GM12878 (cell line): ENCODE measurements at regions of chr15 and their contacts with region 1.

Region 1: DNA sequence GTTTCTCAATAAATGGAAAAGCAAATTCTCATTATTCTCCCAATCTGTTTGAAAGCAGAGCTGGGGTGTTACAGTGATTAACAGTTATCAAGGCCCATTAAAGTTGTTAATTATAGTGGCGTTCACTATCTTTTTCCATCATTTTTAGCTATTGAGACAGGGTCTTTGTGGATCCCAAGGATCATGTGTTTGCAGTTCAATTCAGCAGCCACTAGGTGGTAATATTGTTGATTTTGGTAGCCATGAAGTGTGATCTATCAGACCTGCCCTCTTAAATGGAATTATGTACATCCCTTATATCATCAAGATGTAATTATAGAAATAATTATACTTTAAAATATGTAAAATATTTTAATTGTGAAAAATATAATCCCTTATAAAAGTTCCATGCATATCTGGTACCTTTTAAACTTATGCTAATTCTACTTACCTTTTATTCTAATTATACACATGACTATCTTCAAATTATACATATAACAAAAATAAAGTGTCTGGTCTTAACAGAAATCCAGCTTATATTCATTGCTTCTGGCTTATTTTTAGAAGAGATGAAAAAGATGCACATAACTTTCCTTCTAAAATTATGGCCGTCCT is 126.4 kb downstream of the GREM1 start:
- DNase-seq: no peak
- ATAC-seq: peak; percentile 74; the same call in 2 of the 3 replicates
- H3K4me3 ChIP-seq: no peak overlapping the region
- H3K27ac ChIP-seq: no peak overlapping the region
- H3K4me1 ChIP-seq: no peaks in the 10 kb centered on the region
- H3K27me3 ChIP-seq: 0 out of 4 replicates have a peak, but pooled peaks cover 2% of the 10 kb centered on the region in 2 experiments
- CTCF ChIP-seq: peak; percentile 58 to 65 (median 65); a peak in 5 of 6 replicates
- EP300 ChIP-seq: no peak
- POLR2A ChIP-seq: no peak
- RAD21 ChIP-seq: peak; percentile 63

Region 2: GRCh38 chr15:32060706-32061105 is 783.5 kb before region 1 on chr15:
- CTCF ChIA-PET with region 1: no interaction called
- POLR2A ChIA-PET with region 1: no interaction called
- RAD21 ChIA-PET with region 1: no interaction called
- SMC1A ChIA-PET with region 1: no interaction called
- in situ Hi-C with region 1: no loop called
- intact Hi-C with region 1: no loop called
- DNase-seq: no peak
- ATAC-seq: no peak
- H3K4me3 ChIP-seq: no peak overlapping the region
- H3K27ac ChIP-seq: no peak overlapping the region
- H3K4me1 ChIP-seq: no peaks in the 10 kb centered on the region
- H3K27me3 ChIP-seq: no peaks in the 10 kb centered on the region
- CTCF ChIP-seq: no peak
- EP300 ChIP-seq: no peak
- POLR2A ChIP-seq: no peak
- RAD21 ChIP-seq: no peak

Region 3: DNA sequence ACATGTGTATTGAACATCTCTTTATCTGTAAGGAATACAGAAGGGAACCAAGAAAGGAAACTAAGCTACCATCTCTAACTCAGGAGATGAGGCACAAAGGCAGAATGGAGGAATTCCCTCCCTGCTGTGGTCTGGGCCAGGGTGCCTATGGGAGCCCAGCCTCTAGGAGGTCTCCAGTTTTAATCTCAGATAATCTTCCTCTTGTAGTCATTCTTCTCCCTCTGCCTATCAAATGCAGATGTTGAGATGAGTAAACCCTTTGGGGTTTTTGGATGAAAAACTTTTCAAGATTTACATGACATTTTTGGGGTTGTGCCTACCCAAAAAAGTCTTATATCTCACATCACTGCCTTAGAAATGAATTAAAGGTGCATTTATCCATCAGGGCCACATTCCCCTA is 179.4 kb before region 1 on chr15:
- CTCF ChIA-PET with region 1: interaction called, 46 read pairs
- POLR2A ChIA-PET with region 1: no interaction called
- RAD21 ChIA-PET with region 1: interaction called, 10 read pairs
- SMC1A ChIA-PET with region 1: interaction called, 14 read pairs
- in situ Hi-C with region 1: no loop called
- intact Hi-C with region 1: no loop called
- DNase-seq: no peak
- ATAC-seq: no peak
- H3K4me3 ChIP-seq: no peak overlapping the region
- H3K27ac ChIP-seq: no peak overlapping the region
- H3K4me1 ChIP-seq: no peaks in the 10 kb centered on the region
- H3K27me3 ChIP-seq: no peaks in the 10 kb centered on the region
- CTCF ChIP-seq: no peak
- EP300 ChIP-seq: no peak
- POLR2A ChIP-seq: no peak
- RAD21 ChIP-seq: no peak

Region 4: DNA sequence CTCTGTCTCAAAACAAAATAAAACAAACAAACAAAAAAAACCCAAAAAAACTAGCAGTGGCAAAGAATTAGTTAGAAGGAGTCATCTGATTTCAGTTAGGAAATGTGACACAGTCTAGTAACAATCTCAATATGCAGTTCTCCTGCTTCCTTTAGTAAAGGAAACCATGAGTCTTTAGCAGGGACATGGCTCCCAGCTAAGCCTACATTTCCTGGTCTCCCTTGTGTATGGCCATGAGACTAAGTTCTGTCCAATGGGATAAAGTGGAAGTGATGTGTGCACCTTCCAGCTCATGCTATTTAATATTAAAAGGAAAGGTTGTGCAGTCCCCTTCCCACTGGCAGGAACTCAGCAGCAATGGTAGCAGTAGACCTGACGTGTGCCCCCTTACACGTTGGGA is 51.8 kb before region 1 on chr15:
- CTCF ChIA-PET with region 1: no interaction called
- POLR2A ChIA-PET with region 1: no interaction called
- RAD21 ChIA-PET with region 1: no interaction called
- SMC1A ChIA-PET with region 1: no interaction called
- in situ Hi-C with region 1: no loop called
- intact Hi-C with region 1: no loop called
- DNase-seq: no peak
- ATAC-seq: no peak
- H3K4me3 ChIP-seq: no peak overlapping the region
- H3K27ac ChIP-seq: no peak overlapping the region
- H3K4me1 ChIP-seq: no peaks in the 10 kb centered on the region
- H3K27me3 ChIP-seq: peaks cover 0 to 2% of the 10 kb centered on the region in 2 experiments; a peak in 2 of 4 replicates
- CTCF ChIP-seq: no peak
- EP300 ChIP-seq: no peak
- POLR2A ChIP-seq: no peak
- RAD21 ChIP-seq: no peak

Region 5: GRCh38 chr15:32855942-32856341 is 11.7 kb after region 1 on chr15:
- CTCF ChIA-PET with region 1: interaction called, 13 read pairs
- POLR2A ChIA-PET with region 1: no interaction called
- RAD21 ChIA-PET with region 1: interaction called, 3 read pairs
- SMC1A ChIA-PET with region 1: interaction called, 15 read pairs
- in situ Hi-C with region 1: no loop called
- intact Hi-C with region 1: no loop called
- DNase-seq: no peak
- ATAC-seq: no peak
- H3K4me3 ChIP-seq: no peak overlapping the region
- H3K27ac ChIP-seq: no peak overlapping the region
- H3K4me1 ChIP-seq: no peaks in the 10 kb centered on the region
- H3K27me3 ChIP-seq: no peaks in the 10 kb centered on the region; a peak in 1 of 4 replicates
- CTCF ChIP-seq: no peak
- EP300 ChIP-seq: no peak
- POLR2A ChIP-seq: no peak
- RAD21 ChIP-seq: no peak

Region 6: GRCh38 chr15:32870240-32871033 is 26.2 kb after region 1 on chr15:
- CTCF ChIA-PET with region 1: interaction called, 19 read pairs
- POLR2A ChIA-PET with region 1: no interaction called
- RAD21 ChIA-PET with region 1: interaction called, 3 read pairs
- SMC1A ChIA-PET with region 1: interaction called, 8 read pairs
- in situ Hi-C with region 1: no loop called
- intact Hi-C with region 1: no loop called
- DNase-seq: peak; percentile 60
- ATAC-seq: peak; percentile 94
- H3K4me3 ChIP-seq: no peak overlapping the region
- H3K27ac ChIP-seq: no peak overlapping the region
- H3K4me1 ChIP-seq: peaks cover 3% of the 10 kb centered on the region; the same call in 1 of the 2 replicates
- H3K27me3 ChIP-seq: no peaks in the 10 kb centered on the region
- CTCF ChIP-seq: no peak
- EP300 ChIP-seq: peak; percentile 89 to 92
- POLR2A ChIP-seq: no peak
- RAD21 ChIP-seq: no peak

Region 7: GRCh38 chr15:32908135-32908801 is 64.1 kb after region 1 on chr15:
- CTCF ChIA-PET with region 1: interaction called, 8 read pairs
- POLR2A ChIA-PET with region 1: no interaction called
- RAD21 ChIA-PET with region 1: interaction called, 17 read pairs
- SMC1A ChIA-PET with region 1: interaction called, 7 read pairs
- in situ Hi-C with region 1: no loop called
- intact Hi-C with region 1: no loop called
- DNase-seq: peak; percentile 71
- ATAC-seq: peak; percentile 95
- H3K4me3 ChIP-seq: peak overlapping the region; percentile 51; the same call in 1 of the 2 replicates
- H3K27ac ChIP-seq: peak overlapping the region; percentile 64
- H3K4me1 ChIP-seq: peaks cover 24% of the 10 kb centered on the region
- H3K27me3 ChIP-seq: no peaks in the 10 kb centered on the region
- CTCF ChIP-seq: no peak
- EP300 ChIP-seq: peak; percentile 91 to 96
- POLR2A ChIP-seq: no peak
- RAD21 ChIP-seq: no peak

Region 8: GRCh38 chr15:32941823-32942222 is 97.6 kb after region 1 on chr15:
- CTCF ChIA-PET with region 1: interaction called, 111 read pairs
- POLR2A ChIA-PET with region 1: interaction called, 3 read pairs
- RAD21 ChIA-PET with region 1: interaction called, 40 read pairs
- SMC1A ChIA-PET with region 1: interaction called, 49 read pairs
- in situ Hi-C with region 1: no loop called
- intact Hi-C with region 1: no loop called
- DNase-seq: no peak
- ATAC-seq: no peak
- H3K4me3 ChIP-seq: no peak overlapping the region
- H3K27ac ChIP-seq: no peak overlapping the region
- H3K4me1 ChIP-seq: no peaks in the 10 kb centered on the region
- H3K27me3 ChIP-seq: no peaks in the 10 kb centered on the region; a peak in 1 of 4 replicates
- CTCF ChIP-seq: no peak
- EP300 ChIP-seq: no peak
- POLR2A ChIP-seq: no peak
- RAD21 ChIP-seq: no peak

Region 9: GRCh38 chr15:32994810-32995424 is 150.7 kb after region 1 on chr15:
- CTCF ChIA-PET with region 1: interaction called, 72 read pairs
- POLR2A ChIA-PET with region 1: no interaction called
- RAD21 ChIA-PET with region 1: interaction called, 13 read pairs
- SMC1A ChIA-PET with region 1: interaction called, 38 read pairs
- in situ Hi-C with region 1: no loop called
- intact Hi-C with region 1: loop called (anchors 1 kb)
- DNase-seq: no peak
- ATAC-seq: peak; percentile 57; the same call in 2 of the 3 replicates
- H3K4me3 ChIP-seq: no peak overlapping the region
- H3K27ac ChIP-seq: no peak overlapping the region
- H3K4me1 ChIP-seq: no peaks in the 10 kb centered on the region
- H3K27me3 ChIP-seq: peaks cover 0 to 3% of the 10 kb centered on the region in 2 experiments; a peak in 1 of 4 replicates
- CTCF ChIP-seq: peak; percentile 32 to 64 (median 47); a peak in 4 of 6 replicates
- EP300 ChIP-seq: no peak
- POLR2A ChIP-seq: no peak
- RAD21 ChIP-seq: peak; percentile 60

Region 10: DNA sequence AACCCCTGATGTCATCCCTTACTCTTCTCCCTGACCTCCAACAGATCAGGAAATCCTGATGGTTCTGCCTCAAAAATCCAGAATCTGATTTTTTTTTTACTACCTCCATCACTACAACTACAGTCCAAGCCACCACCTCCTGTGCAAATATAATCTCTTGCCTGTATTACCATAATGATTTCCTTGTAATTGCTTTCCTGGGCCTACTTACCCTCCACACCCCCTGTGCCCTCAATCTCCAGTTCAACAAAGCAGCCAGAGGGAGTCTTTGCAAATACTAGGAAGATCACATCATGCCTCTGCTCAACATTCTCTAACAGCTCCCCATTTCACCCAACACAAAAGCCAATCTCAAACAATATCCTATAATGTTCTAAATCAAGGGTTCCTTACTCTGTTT is 190.4 kb after region 1 on chr15:
- CTCF ChIA-PET with region 1: no interaction called
- POLR2A ChIA-PET with region 1: no interaction called
- RAD21 ChIA-PET with region 1: no interaction called
- SMC1A ChIA-PET with region 1: no interaction called
- in situ Hi-C with region 1: no loop called
- intact Hi-C with region 1: no loop called
- DNase-seq: no peak
- ATAC-seq: no peak
- H3K4me3 ChIP-seq: no peak overlapping the region
- H3K27ac ChIP-seq: no peak overlapping the region
- H3K4me1 ChIP-seq: no peaks in the 10 kb centered on the region
- H3K27me3 ChIP-seq: no peaks in the 10 kb centered on the region; a peak in 1 of 4 replicates
- CTCF ChIP-seq: no peak
- EP300 ChIP-seq: no peak
- POLR2A ChIP-seq: no peak
- RAD21 ChIP-seq: no peak